AG04450 (cell line): ENCODE measurements at regions of chr3 and their contacts with region 1.

Region 1: DNA sequence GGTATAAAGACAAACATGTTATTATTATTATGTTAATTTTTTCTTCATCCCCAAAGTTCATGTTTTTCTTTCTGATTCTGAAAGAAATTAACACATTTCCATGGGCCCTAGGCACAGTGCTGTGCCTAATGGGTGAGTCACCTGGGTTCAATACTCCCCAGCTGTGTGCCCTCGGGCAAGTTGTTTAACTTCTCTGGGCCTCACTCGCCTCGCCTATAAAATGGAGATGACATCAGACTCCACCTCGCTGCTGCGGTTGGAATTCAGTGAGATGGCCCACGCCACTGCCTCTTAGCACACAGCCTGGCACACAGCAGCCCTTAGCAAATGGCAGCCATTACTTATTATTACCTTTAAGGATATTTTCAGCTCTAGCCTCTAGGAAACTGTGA is 22.6 kb downstream of the DNASE1L3 start:
- DNase-seq: no peak
- H3K4me3 ChIP-seq: no peak overlapping the region
- H3K27ac ChIP-seq: no peak overlapping the region
- H3K27me3 ChIP-seq: peaks cover 2% of the 10 kb centered on the region
- CTCF ChIP-seq: no peak

Region 2: DNA sequence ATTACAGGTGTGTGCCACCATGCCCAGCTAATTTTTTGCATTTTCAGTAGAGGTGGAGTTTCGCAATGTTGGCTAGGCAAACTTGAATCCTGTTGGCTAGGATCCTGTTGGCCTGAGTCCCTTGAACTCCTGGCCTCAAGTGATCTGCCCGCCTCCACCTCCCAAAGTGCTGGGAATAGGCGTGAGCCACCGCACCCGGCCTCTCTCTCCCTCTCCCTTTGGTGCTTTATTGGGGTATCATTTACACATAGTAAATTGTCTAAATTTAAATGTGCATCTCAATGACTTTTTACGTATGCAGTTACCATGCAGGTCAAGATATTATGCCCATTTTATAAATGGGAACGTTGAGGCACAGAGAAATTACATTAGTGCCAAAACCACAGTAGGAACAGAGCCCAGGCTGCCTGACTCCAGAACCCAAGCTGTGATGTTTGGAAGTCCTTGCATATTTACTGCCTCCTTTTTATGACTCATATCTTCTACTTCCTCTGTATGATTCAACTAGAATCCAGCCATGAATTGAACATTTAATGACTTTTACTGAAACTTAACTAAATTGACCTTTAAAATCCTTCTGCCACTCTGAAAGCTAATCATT is 83.8 kb after region 1 on chr3:
- CTCF ChIA-PET with region 1: interaction called, 10 read pairs
- POLR2A ChIA-PET with region 1: no interaction called
- DNase-seq: peak; percentile 71
- H3K4me3 ChIP-seq: no peak overlapping the region
- H3K27ac ChIP-seq: no peak overlapping the region
- H3K27me3 ChIP-seq: no peaks in the 10 kb centered on the region
- CTCF ChIP-seq: no peak

Region 3: DNA sequence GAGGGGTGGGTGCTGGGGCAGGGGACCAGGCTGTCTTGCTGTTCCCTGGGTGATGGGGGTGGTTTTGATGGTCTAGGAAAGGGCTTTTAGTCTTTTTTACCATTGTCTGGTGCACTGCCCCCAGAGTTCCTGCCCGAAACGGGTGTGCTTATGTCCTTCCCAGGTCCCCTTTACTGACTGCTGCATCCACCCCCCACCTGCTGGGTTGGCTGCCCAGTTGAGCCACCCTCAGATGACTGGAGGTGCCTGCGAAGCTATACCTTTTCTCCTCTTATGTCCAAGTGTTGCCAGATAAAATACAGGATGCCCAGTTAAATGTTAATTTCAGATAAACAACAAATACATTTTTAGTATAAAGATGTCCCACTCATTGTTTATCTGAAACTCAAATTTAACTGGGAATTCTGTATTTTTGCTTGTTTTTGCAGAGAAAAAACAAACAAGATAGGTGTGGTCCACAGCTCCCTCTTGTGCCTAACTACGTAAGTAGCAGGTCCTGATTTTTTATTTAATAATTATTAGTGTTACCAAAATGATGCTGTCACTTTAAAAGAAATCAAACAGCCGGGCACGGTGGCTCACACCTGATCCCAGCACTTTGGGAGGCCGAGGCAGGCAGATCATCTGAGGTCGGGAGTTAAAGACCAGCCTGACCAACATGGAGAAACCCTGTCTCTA is 111.8 kb after region 1 on chr3:
- CTCF ChIA-PET with region 1: interaction called, 216 read pairs
- POLR2A ChIA-PET with region 1: no interaction called
- DNase-seq: peak; percentile 13
- H3K4me3 ChIP-seq: no peak overlapping the region
- H3K27ac ChIP-seq: no peak overlapping the region
- H3K27me3 ChIP-seq: peaks cover 10% of the 10 kb centered on the region
- CTCF ChIP-seq: peak; percentile 63